ENCODE measurements at regions of chr5 and their contacts with region 1.

Region 1: GRCh38 chr5:124741711-124742496 is 4.5 kb downstream of the ZNF608 start:
- DNase-seq: no peak
- ATAC-seq: peak in 1 of 4 donors; percentile 24
- H3K4me3 ChIP-seq: no peak overlapping the region
- H3K27ac ChIP-seq: no peak overlapping the region
- H3K4me1 ChIP-seq: peaks cover 0 to 17% (median 0%) of the 10 kb centered on the region in 4 donors
- H3K27me3 ChIP-seq: no peaks in the 10 kb centered on the region
- CTCF ChIP-seq: no peak
- POLR2A ChIP-seq: no peak

Region 2: DNA sequence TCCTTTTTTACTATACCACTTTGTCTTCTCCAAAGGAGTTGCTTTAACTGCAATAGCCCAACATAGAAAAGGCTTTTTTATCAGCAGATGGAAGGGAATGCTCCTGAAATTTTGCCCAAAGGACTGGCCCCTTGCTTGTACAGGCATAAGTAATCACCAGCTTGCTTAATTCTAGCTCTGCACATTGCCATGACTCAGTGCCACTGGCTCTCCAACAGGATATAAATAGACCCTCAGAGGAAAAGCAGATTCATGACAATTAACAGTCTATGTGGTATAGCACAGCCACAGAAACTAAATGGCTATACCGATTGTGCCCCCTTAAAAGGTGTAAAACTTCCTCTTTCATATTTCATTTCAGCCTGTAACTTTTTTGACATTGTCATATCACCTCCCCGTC is 222.5 kb before region 1 on chr5:
- intact Hi-C with region 1: no loop called
- DNase-seq: no peak
- ATAC-seq: no peak
- H3K4me3 ChIP-seq: no peak overlapping the region
- H3K27ac ChIP-seq: no peak overlapping the region
- H3K4me1 ChIP-seq: no peaks in the 10 kb centered on the region
- H3K27me3 ChIP-seq: no peaks in the 10 kb centered on the region
- CTCF ChIP-seq: no peak
- POLR2A ChIP-seq: no peak

Region 3: GRCh38 chr5:124661317-124662141 is 80.4 kb before region 1 on chr5:
- intact Hi-C with region 1: loop called in 1 of 2 experiments (anchors 5 kb)
- DNase-seq: no peak
- ATAC-seq: peak; percentile 83 to 95 (median 88)
- H3K4me3 ChIP-seq: peak overlapping the region in 2 of 3 donors; percentile 12 to 16
- H3K27ac ChIP-seq: peak overlapping the region; percentile 47 to 75 (median 58)
- H3K4me1 ChIP-seq: peaks cover 0 to 28% (median 13%) of the 10 kb centered on the region in 4 donors
- H3K27me3 ChIP-seq: no peaks in the 10 kb centered on the region
- CTCF ChIP-seq: no peak
- POLR2A ChIP-seq: no peak